ENCODE measurements at regions of chr15 and their contacts with region 1.

Region 1: GRCh38 chr15:96097661-96098060 is 232.8 kb upstream of the NR2F2 start:
- DNase-seq: no peak
- H3K4me3 ChIP-seq: no peak overlapping the region
- H3K27ac ChIP-seq: no peak overlapping the region
- H3K4me1 ChIP-seq: no peaks in the 10 kb centered on the region
- H3K27me3 ChIP-seq: no peaks in the 10 kb centered on the region
- CTCF ChIP-seq: no peak
- POLR2A ChIP-seq: no peak

Region 2: GRCh38 chr15:95604634-95605036 is 493.0 kb before region 1 on chr15:
- intact Hi-C with region 1: loop called (anchors 5 kb)
- DNase-seq: no peak
- H3K4me3 ChIP-seq: no peak overlapping the region
- H3K27ac ChIP-seq: peak overlapping the region in 1 of 2 donors; percentile 69
- H3K4me1 ChIP-seq: no peaks in the 10 kb centered on the region
- H3K27me3 ChIP-seq: no peaks in the 10 kb centered on the region
- CTCF ChIP-seq: no peak
- POLR2A ChIP-seq: no peak

Region 3: GRCh38 chr15:96053031-96053780 is 44.5 kb before region 1 on chr15:
- intact Hi-C with region 1: no loop called
- DNase-seq: peak; percentile 20 to 59
- H3K4me3 ChIP-seq: peak overlapping the region; percentile 15 to 59 (median 44)
- H3K27ac ChIP-seq: peak overlapping the region; percentile 11 to 48
- H3K4me1 ChIP-seq: no peaks in the 10 kb centered on the region
- H3K27me3 ChIP-seq: no peaks in the 10 kb centered on the region
- CTCF ChIP-seq: no peak
- POLR2A ChIP-seq: no peak

Region 4: DNA sequence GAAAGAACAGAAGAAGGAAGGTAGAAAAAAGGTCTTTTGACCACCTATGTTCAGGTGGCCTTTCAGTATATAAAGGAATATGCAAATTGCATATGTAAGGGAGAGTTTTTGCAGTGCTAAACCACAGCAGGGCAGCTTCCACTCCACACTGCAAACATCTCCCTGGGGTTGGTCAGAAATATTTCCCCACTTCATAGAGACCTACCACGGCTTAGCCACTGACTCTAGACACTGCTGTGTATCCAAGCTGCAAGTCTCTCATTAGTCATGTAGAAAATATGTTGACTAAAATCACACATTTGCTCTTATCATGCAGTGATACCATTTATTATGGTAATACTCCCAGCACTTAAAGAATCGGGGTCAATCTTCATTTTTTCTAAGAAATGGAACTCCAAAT is 18.0 kb after region 1 on chr15:
- intact Hi-C with region 1: no loop called
- DNase-seq: no peak
- H3K4me3 ChIP-seq: no peak overlapping the region
- H3K27ac ChIP-seq: no peak overlapping the region
- H3K4me1 ChIP-seq: no peaks in the 10 kb centered on the region
- H3K27me3 ChIP-seq: no peaks in the 10 kb centered on the region
- CTCF ChIP-seq: no peak
- POLR2A ChIP-seq: no peak

Measured in breast epithelium (tissue), 4 donors.